ENCODE measurements at regions of chr16 and their contacts with region 1.

Region 1: GRCh38 chr16:740764-741505 is at the start of gene CIAO3:
- DNase-seq: peak; percentile 79
- ATAC-seq: peak; percentile 85
- H3K4me3 ChIP-seq: peak within 1 kb of the TSS; percentile 94 to 97 (median 95)
- H3K27ac ChIP-seq: peak within 1 kb of the TSS; percentile 59
- H3K4me1 ChIP-seq: peaks cover 18% of the 10 kb centered on the region
- H3K27me3 ChIP-seq: no peaks in the 10 kb centered on the region
- CTCF ChIP-seq: peak; percentile 94
- EP300 ChIP-seq: 0 out of 4 replicates have a peak, but pooled peaks of 1 of the 2 experiments have one; percentile 11
- POLR2A ChIP-seq: peak; percentile 50 to 68; a peak in 3 of 4 replicates
- RAD21 ChIP-seq: peak; percentile 78
- total RNA-seq, gene CIAO3: 16.9 and 21.7 TPM in 2 replicates

Region 2: GRCh38 chr16:788394-789126 is 47.6 kb after region 1 on chr16 and contains the start of gene CHTF18:
- CTCF ChIA-PET with region 1: interaction called, 4 read pairs
- POLR2A ChIA-PET with region 1: interaction called, 9 read pairs
- in situ Hi-C with region 1: loop called (anchors 5 kb)
- intact Hi-C with region 1: loop called (anchors 1 kb)
- DNase-seq: peak; percentile 73
- ATAC-seq: peak; percentile 66
- H3K4me3 ChIP-seq: peak within 1 kb of the TSS; percentile 71 to 96 (median 90)
- H3K27ac ChIP-seq: peak within 1 kb of the TSS; percentile 47
- H3K4me1 ChIP-seq: peaks cover 15% of the 10 kb centered on the region
- H3K27me3 ChIP-seq: no peaks in the 10 kb centered on the region; a peak in 1 of 5 replicates
- CTCF ChIP-seq: no peak
- EP300 ChIP-seq: no peak
- POLR2A ChIP-seq: peak in 1 of 2 experiments; percentile 57; a peak in 1 of 4 replicates
- RAD21 ChIP-seq: no peak
- total RNA-seq, gene CHTF18: 8.8 and 22.9 TPM in 2 replicates

Region 3: GRCh38 chr16:951660-952301 is 210.8 kb after region 1 on chr16:
- CTCF ChIA-PET with region 1: no interaction called
- POLR2A ChIA-PET with region 1: no interaction called
- in situ Hi-C with region 1: no loop called
- intact Hi-C with region 1: no loop called
- DNase-seq: no peak
- ATAC-seq: no peak
- H3K4me3 ChIP-seq: no peak overlapping the region
- H3K27ac ChIP-seq: no peak overlapping the region
- H3K4me1 ChIP-seq: no peaks in the 10 kb centered on the region
- H3K27me3 ChIP-seq: no peaks in the 10 kb centered on the region
- CTCF ChIP-seq: no peak
- EP300 ChIP-seq: no peak
- POLR2A ChIP-seq: no peak
- RAD21 ChIP-seq: no peak

Region 4: GRCh38 chr16:1014771-1015495 is 274.0 kb after region 1 on chr16:
- CTCF ChIA-PET with region 1: no interaction called
- POLR2A ChIA-PET with region 1: no interaction called
- in situ Hi-C with region 1: no loop called
- intact Hi-C with region 1: no loop called
- DNase-seq: no peak
- ATAC-seq: no peak
- H3K4me3 ChIP-seq: no peak overlapping the region
- H3K27ac ChIP-seq: no peak overlapping the region
- H3K4me1 ChIP-seq: no peaks in the 10 kb centered on the region
- H3K27me3 ChIP-seq: peaks cover 20 to 87% of the 10 kb centered on the region in 2 experiments
- CTCF ChIP-seq: no peak
- EP300 ChIP-seq: no peak
- POLR2A ChIP-seq: no peak
- RAD21 ChIP-seq: no peak

Measured in HepG2 (cell line).